ENCODE measurements at regions of chr13 and their contacts with region 1.

Region 1: GRCh38 chr13:29508130-29508875 is 87.2 kb downstream of the SLC7A1 start:
- DNase-seq: peak; percentile 84
- H3K4me3 Mint-ChIP-seq: no peak overlapping the region
- H3K27ac Mint-ChIP-seq: peak overlapping the region; percentile 3
- H3K4me1 Mint-ChIP-seq: peaks cover 3% of the 10 kb centered on the region
- H3K27me3 Mint-ChIP-seq: peaks cover 3% of the 10 kb centered on the region

Region 2: DNA sequence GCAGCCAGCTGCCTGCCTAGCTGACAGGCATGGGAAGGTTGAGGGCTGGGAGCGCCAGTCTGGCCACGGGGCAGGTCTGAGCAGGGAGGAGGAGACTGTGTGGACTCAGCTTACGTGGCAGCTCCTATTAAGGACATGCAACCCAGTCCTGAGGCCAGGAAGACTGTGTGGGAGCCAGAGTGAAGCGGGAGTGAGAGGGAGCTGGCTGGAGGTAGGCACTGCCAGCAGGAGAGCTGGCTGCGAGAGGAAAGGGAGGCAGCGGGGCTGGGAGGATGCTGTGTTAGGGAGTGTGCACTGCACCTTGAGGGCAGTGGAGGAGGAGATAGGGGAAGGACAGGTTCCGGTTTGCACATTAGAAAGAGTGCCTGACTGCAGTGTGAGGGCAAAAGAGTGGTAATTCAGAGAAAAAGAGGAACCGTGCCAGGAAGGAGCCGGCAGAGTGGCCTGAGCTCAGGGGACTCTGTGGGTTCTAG is 12.0 kb before region 1 on chr13:
- CTCF ChIA-PET with region 1: interaction called, 12 read pairs
- intact Hi-C with region 1: no loop called
- DNase-seq: no peak
- H3K4me3 Mint-ChIP-seq: no peak overlapping the region
- H3K27ac Mint-ChIP-seq: no peak overlapping the region
- H3K4me1 Mint-ChIP-seq: no peaks in the 10 kb centered on the region
- H3K27me3 Mint-ChIP-seq: peaks cover 21% of the 10 kb centered on the region

Region 3: GRCh38 chr13:29707876-29708543 is 199.7 kb after region 1 on chr13:
- CTCF ChIA-PET with region 1: interaction called, 69 read pairs
- intact Hi-C with region 1: loop called (anchors 1 kb)
- DNase-seq: peak; percentile 68
- H3K4me3 Mint-ChIP-seq: no peak overlapping the region
- H3K27ac Mint-ChIP-seq: no peak overlapping the region
- H3K4me1 Mint-ChIP-seq: no peaks in the 10 kb centered on the region
- H3K27me3 Mint-ChIP-seq: peaks cover 7% of the 10 kb centered on the region

Region 4: DNA sequence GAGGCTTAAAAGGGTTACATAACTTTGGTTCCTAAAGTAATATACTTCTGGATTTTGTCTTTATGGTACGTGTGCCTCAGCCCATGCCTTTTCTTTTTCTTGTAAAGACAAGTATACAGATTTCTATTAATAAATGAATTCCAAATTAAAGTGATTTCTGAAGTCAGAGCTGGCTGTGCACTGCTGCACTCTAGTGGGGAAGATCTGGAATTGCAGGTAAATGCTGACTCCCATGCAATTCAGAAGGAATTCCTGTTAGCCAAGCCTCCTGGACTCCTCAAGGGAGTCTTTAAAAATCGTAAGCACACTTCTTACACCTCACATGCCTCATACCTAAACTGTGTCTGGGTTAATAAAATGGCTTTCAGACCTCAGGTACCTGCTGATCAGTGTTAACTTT is 205.5 kb after region 1 on chr13:
- CTCF ChIA-PET with region 1: interaction called, 69 read pairs
- intact Hi-C with region 1: loop called (anchors 1 kb)
- DNase-seq: no peak
- H3K4me3 Mint-ChIP-seq: no peak overlapping the region
- H3K27ac Mint-ChIP-seq: no peak overlapping the region
- H3K4me1 Mint-ChIP-seq: no peaks in the 10 kb centered on the region
- H3K27me3 Mint-ChIP-seq: peaks cover 6% of the 10 kb centered on the region

Region 5: GRCh38 chr13:30107581-30107992 is 599.3 kb after region 1 on chr13:
- CTCF ChIA-PET with region 1: no interaction called
- intact Hi-C with region 1: no loop called
- DNase-seq: no peak
- H3K4me3 Mint-ChIP-seq: no peak overlapping the region
- H3K27ac Mint-ChIP-seq: no peak overlapping the region
- H3K4me1 Mint-ChIP-seq: peaks cover 7% of the 10 kb centered on the region
- H3K27me3 Mint-ChIP-seq: no peaks in the 10 kb centered on the region

Measured in activated naive CD4-positive, alpha-beta T cell treated with anti-CD3 and anti-CD28 coated beads for 36 hours (primary cell).